ENCODE measurements at regions of chr22 and their contacts with region 1.

Region 1: GRCh38 chr22:18152519-18152918 is 2.5 kb downstream of the USP18 start:
- DNase-seq: no peak
- ATAC-seq: no peak
- H3K4me3 ChIP-seq: no peak overlapping the region
- H3K27ac ChIP-seq: no peak overlapping the region
- H3K4me1 ChIP-seq: peaks cover 8% of the 10 kb centered on the region
- H3K27me3 ChIP-seq: no peaks in the 10 kb centered on the region
- CTCF ChIP-seq: no peak

Region 2: DNA sequence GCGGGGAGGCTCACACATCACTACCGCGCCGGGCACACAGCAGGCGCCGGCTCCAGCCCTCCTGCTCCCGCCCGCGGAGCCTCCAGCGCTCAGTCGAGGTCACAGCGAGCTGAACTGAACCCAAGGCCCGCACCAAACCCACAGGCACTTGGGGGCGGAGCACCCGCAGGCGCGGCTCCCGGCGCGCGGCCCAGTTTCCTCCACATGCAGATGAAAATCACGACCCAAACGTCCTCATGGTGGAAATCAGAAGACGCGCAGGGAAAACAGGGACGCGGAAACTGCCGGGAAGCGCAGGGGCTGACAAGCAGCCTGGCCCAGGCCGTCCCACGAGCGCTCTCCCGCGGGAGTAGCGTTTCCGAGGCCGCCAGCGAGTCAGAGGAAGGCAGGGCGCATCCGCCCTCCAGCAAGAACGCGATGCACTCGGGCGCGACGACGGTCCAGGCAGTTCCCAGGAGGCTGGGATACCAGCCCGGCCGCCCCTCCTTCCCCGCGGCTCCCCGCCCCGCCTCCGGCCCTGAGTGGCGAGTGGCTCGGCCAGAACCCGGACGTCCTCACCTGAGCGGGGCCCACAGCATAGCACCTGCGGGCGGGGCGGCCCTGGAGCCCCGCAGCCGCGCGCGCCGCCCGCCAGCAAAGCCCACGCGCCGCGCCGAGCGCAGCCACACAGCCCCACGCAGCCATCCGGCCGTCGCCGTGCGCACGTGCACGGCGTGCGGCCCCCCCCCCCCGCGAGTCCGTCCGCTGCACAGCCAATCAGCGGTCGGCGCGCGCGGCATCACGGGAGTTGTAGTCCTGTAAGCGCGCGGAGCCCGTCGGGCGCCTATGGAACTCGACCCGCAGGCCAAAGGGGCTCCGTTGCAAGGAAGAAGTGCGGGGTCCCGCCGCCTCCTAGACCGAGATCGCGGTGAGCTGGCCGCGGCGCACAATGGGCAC is 993.7 kb before region 1 on chr22 and contains the start of gene HDHD5:
- CTCF ChIA-PET with region 1: no interaction called
- POLR2A ChIA-PET with region 1: interaction called, 21 read pairs
- intact Hi-C with region 1: no loop called
- DNase-seq: peak; percentile 75
- ATAC-seq: peak; percentile 84
- H3K4me3 ChIP-seq: peak within 1 kb of the TSS; percentile 83
- H3K27ac ChIP-seq: peak within 1 kb of the TSS; percentile 51
- H3K4me1 ChIP-seq: peaks cover 16% of the 10 kb centered on the region
- H3K27me3 ChIP-seq: no peaks in the 10 kb centered on the region
- CTCF ChIP-seq: no peak
- total RNA-seq, gene HDHD5: 57.3 and 62.9 TPM in 2 replicates

Region 3: DNA sequence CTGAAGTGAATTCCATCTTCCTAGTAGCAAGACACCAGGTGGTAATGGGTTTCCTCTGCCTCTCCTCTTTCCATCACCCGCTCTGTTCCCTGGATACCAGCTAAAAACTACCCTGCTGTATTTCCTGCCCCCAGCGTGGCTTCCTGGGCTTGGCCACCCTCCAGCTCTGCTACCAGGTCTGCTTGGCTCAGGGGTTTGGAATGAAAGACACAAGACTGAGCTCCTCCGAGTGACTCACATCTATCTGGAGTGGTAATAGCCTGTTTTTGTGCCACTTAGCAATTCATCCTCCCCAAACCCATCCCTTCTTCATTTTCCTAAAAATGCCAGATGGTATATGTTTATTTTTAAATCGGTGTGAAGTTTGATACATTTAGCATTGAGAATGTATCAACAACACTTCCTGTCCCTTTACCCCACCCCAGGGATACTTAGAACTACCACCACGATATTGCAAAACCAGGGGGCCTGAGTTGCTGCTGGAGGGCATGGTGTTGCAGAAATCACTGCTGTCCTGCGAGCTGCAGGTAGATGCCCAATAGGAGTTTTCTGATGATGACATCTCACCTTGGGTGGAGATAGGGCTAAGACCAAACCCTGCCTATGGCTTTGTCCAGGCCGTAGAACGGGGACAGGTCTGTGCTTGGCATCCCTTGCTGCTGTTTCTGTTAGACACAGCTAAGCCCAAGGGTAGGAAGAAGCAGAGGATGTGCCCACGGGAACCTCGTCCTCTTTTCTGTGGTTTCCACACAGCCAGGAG is 120.6 kb before region 1 on chr22:
- CTCF ChIA-PET with region 1: no interaction called
- POLR2A ChIA-PET with region 1: no interaction called
- intact Hi-C with region 1: no loop called
- DNase-seq: peak; percentile 95
- ATAC-seq: peak; percentile 82
- H3K4me3 ChIP-seq: peak overlapping the region; percentile 61
- H3K27ac ChIP-seq: peak overlapping the region; percentile 97
- H3K4me1 ChIP-seq: peaks cover 49% of the 10 kb centered on the region
- H3K27me3 ChIP-seq: no peaks in the 10 kb centered on the region
- CTCF ChIP-seq: no peak

Region 4: DNA sequence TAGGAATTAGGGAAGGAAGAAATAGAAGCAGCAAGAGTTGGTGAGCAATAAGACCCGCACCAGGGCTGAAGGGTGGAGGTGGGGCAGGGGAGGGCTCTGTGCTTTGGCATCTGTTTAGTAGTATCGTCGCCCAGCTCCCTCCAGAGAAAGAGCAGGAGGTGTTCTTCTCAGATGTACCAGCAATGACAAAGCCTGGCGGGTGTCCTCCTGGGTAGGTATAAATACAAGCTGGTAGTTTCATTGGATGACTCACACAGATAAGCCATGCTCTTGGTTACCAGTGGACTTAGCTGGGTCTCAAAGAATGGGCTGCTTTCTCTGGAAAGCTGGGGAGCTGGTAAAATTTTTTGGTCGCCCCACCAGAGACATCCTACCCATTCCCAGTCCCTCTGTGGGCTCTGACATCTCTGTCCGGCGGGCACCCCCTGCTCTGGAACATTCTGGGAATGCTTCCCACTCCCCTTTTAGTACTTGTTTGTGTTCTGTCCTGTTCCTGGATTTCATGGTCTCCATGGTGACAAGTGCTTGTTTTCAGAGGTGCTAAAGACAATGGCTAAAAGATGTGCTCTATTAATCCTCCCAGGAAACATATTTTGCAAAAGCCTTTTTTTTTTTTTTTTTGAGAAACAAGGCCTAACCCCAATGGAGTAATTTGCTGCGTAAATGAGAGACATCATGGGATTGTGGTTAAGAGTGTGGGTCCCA is 57.3 kb before region 1 on chr22:
- CTCF ChIA-PET with region 1: no interaction called
- POLR2A ChIA-PET with region 1: interaction called, 11 read pairs
- intact Hi-C with region 1: no loop called
- DNase-seq: peak; percentile 38
- ATAC-seq: peak; percentile 42; the same call in 1 of the 2 replicates
- H3K4me3 ChIP-seq: no peak overlapping the region
- H3K27ac ChIP-seq: no peak overlapping the region
- H3K4me1 ChIP-seq: 0 out of 2 replicates have a peak, but pooled peaks cover 6% of the 10 kb centered on the region
- H3K27me3 ChIP-seq: no peaks in the 10 kb centered on the region
- CTCF ChIP-seq: no peak

Measured in PC-3 (cell line).